Caco-2 (cell line): ENCODE measurements at regions of chr6 and their contacts with region 1.

Region 1: GRCh38 chr6:13277836-13278563 is 50.3 kb downstream of the TBC1D7 start:
- DNase-seq: peak in 1 of 2 experiments; percentile 40
- H3K4me3 ChIP-seq: no peak overlapping the region
- H3K4me3 Mint-ChIP-seq: no peak overlapping the region
- H3K27ac Mint-ChIP-seq: no peak overlapping the region
- H3K4me1 ChIP-seq: peaks cover 14% of the 10 kb centered on the region
- H3K4me1 Mint-ChIP-seq: peaks cover 12% of the 10 kb centered on the region
- H3K27me3 ChIP-seq: no peaks in the 10 kb centered on the region
- H3K27me3 Mint-ChIP-seq: no peaks in the 10 kb centered on the region
- CTCF ChIP-seq: peak; percentile 15 to 57

Region 2: DNA sequence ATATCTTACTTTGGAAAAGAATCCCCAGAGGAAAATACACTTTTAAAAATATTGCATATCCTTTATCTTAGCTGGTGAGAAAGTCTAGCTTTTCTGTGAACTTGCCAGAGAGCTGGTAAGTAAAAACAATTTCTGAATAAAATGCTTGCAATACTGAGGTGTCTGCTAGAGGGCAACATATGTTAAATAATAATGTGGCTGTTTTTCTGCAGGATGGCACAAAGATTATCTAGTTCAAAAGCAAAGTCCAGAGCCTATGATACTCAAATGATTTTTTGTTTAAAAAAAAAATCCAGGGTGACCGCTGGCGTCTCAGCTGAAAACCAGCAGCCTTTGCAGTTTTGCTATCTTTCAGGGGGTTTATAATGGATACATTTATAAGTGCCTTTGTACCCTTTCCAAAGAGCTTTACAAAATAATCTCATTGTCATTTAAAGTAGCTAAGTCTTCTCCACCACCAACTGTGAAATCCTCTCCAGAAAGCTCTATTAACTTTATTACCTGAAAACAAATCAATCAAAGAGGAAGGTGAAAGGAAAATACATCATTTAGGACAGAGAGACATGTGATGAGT is 366.5 kb before region 1 on chr6:
- CTCF ChIA-PET with region 1: no interaction called
- POLR2A ChIA-PET with region 1: no interaction called
- intact Hi-C with region 1: loop called (anchors 5 kb)
- DNase-seq: peak in 1 of 2 experiments; percentile 13
- H3K4me3 ChIP-seq: no peak overlapping the region
- H3K4me3 Mint-ChIP-seq: no peak overlapping the region
- H3K27ac Mint-ChIP-seq: no peak overlapping the region
- H3K4me1 ChIP-seq: no peaks in the 10 kb centered on the region
- H3K4me1 Mint-ChIP-seq: peaks cover 6% of the 10 kb centered on the region
- H3K27me3 ChIP-seq: peaks cover 2% of the 10 kb centered on the region
- H3K27me3 Mint-ChIP-seq: peaks cover 25% of the 10 kb centered on the region
- CTCF ChIP-seq: peak in 1 of 2 experiments; percentile 26

Region 3: GRCh38 chr6:13194852-13195251 is 83.1 kb before region 1 on chr6:
- CTCF ChIA-PET with region 1: interaction called, 12 read pairs
- POLR2A ChIA-PET with region 1: no interaction called
- intact Hi-C with region 1: loop called (anchors 1 kb)
- DNase-seq: peak; percentile 70 to 71
- H3K4me3 ChIP-seq: no peak overlapping the region
- H3K4me3 Mint-ChIP-seq: no peak overlapping the region
- H3K27ac Mint-ChIP-seq: no peak overlapping the region
- H3K4me1 ChIP-seq: 0 out of 2 replicates have a peak, but pooled peaks cover 4% of the 10 kb centered on the region
- H3K4me1 Mint-ChIP-seq: peaks cover 8% of the 10 kb centered on the region
- H3K27me3 ChIP-seq: no peaks in the 10 kb centered on the region
- H3K27me3 Mint-ChIP-seq: no peaks in the 10 kb centered on the region
- CTCF ChIP-seq: peak; percentile 55 to 77